IMR-90 (cell line): ENCODE measurements at regions of chr13 and their contacts with region 1.

Region 1: DNA sequence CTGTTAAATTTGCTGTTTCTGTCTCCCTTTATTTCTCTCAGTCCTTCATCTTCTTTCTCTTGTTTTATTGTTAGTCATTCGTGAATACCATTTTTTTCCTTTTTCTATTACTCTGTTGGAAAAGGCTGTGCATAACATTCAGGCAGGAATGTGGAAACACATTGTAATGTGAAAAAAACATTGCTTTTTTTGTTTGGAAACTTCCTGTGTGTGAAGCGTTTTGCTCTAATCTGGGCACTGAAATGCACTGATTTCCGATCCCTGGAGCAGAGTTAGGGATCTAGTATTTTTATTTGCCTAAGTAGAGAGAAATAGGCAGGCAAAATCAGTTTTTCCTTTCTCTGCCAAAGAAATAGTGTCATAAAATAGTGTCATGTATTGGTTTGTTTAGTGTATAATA is 155.5 kb downstream of the PCCA start:
- DNase-seq: no peak
- ATAC-seq: no peak
- H3K4me3 ChIP-seq: no peak overlapping the region
- H3K27ac ChIP-seq: no peak overlapping the region
- H3K4me1 ChIP-seq: no peaks in the 10 kb centered on the region
- H3K27me3 ChIP-seq: no peaks in the 10 kb centered on the region
- CTCF ChIP-seq: no peak
- POLR2A ChIP-seq: no peak
- RAD21 ChIP-seq: no peak

Region 2: DNA sequence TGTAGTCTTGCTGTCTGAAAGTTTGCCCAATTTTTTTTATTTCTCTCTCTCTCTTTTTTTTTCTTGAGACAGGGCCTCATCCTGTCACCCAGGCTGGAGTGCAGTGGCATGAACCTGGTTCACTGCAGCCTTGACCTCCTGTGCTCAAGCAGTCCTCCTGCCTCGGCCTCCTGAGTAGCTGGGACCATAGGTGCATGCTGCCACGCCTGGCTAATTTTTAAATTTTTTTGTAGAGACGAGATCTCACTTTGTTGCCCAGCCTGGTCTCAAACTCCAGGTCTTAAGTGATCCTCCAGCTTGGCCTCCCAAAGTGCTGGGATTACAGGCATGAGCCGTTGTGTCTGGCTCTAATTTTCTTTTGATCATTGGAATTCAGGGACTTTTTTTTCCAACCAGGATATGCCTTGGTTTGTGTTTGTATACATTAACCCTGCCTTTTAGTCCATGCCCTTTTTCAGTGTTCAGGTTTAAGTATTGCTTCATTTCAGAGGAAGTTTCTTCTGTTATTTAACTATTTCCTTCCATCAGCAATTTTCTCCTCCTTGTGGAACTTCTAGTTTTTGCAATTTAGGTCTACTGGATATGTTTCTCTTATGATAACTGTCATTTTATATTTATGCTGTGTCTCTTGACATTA is 45.9 kb after region 1 on chr13:
- CTCF ChIA-PET with region 1: no interaction called
- POLR2A ChIA-PET with region 1: no interaction called
- dilution Hi-C with region 1: no loop called
- in situ Hi-C with region 1: no loop called
- intact Hi-C with region 1: no loop called
- DNase-seq: peak; percentile 44
- ATAC-seq: peak; percentile 66
- H3K4me3 ChIP-seq: no peak overlapping the region
- H3K27ac ChIP-seq: peak overlapping the region; percentile 26; the same call in 1 of the 2 replicates
- H3K4me1 ChIP-seq: peaks cover 10% of the 10 kb centered on the region
- H3K27me3 ChIP-seq: no peaks in the 10 kb centered on the region
- CTCF ChIP-seq: no peak
- POLR2A ChIP-seq: no peak
- RAD21 ChIP-seq: no peak

Region 3: DNA sequence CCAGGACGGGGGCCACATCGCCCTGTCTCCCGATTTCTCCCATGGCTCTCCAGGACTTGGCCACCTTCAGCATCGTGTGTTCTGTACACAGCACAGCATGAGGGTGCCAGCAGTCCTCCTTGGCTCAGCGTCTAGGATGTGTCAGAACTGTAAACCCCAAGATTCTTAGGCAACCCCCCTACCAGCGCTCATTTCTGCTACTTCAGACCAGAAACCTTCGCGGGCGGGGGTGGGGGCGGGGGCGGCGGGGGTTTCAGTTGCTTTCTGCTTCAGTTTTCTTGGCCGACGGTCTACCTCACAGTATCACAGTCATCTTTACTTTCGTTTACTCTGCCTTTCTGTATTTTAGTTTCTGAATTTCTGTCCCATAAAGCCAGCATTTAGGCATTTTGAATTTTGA is 261.7 kb after region 1 on chr13:
- CTCF ChIA-PET with region 1: no interaction called
- POLR2A ChIA-PET with region 1: no interaction called
- dilution Hi-C with region 1: no loop called
- in situ Hi-C with region 1: loop called (anchors 10 kb)
- intact Hi-C with region 1: no loop called
- DNase-seq: no peak
- ATAC-seq: no peak
- H3K4me3 ChIP-seq: no peak overlapping the region
- H3K27ac ChIP-seq: no peak overlapping the region
- H3K4me1 ChIP-seq: peaks cover 4% of the 10 kb centered on the region
- H3K27me3 ChIP-seq: no peaks in the 10 kb centered on the region
- CTCF ChIP-seq: no peak
- POLR2A ChIP-seq: no peak
- RAD21 ChIP-seq: no peak